OCI-LY7 (cell line): ENCODE measurements at regions of chr1 and their contacts with region 1.

Region 1: DNA sequence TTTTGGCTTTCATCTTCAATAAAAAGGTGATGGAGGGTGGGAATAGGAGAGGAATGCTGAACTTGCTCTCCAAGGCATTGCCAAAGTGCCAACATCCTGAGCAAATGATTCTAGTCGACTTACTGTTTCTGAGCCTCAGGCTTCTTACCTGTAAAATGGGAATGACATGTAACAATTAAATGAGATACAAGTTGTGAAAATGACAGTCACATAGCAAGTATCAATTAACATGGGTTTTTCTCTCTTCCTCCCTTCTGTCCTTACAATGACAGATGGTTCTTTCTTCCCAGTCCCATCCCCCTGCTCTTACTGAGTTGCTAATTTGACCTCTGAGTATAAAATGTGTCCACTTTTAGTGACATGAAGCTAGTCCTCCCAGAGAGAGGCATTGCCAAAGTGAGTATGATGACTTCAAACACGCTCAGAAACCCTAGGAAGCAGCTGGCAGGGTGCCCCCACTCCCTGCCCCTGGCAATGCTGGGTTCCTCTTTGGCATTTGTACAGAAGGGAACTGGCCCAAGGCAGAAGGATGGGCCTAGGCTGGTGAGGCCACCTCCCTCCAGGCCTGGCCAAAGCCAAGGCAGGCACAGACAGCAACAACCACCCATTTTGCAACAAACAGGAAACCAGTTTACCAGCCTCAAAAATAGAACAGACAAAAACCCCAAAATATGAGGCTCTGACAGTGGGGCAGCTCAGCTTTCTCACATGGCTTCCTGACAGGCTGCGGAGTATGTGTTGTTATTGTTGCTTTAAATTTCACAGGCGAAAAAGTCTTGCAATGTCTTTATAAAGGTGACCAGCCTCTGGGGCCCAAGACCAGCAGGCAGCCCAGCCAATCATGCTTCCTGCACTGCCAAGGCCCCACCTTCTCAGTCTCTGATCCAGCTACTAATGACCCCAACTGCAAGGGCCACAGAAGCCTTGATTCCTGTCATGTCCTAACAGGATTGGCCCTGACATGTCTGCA is 115.9 kb downstream of the HIVEP3 start:
- DNase-seq: peak; percentile 41
- H3K4me3 ChIP-seq: peak overlapping the region; percentile 21
- H3K27ac ChIP-seq: peak overlapping the region; percentile 55
- H3K4me1 ChIP-seq: peaks cover 47% of the 10 kb centered on the region
- CTCF ChIP-seq: no peak

Region 2: GRCh38 chr1:41341772-41342562 is 460.9 kb before region 1 on chr1:
- CTCF ChIA-PET with region 1: no interaction called
- POLR2A ChIA-PET with region 1: no interaction called
- intact Hi-C with region 1: no loop called
- DNase-seq: no peak
- H3K4me3 ChIP-seq: no peak overlapping the region
- H3K27ac ChIP-seq: no peak overlapping the region
- H3K4me1 ChIP-seq: no peaks in the 10 kb centered on the region
- CTCF ChIP-seq: no peak

Region 3: GRCh38 chr1:41728403-41729202 is 74.2 kb before region 1 on chr1:
- CTCF ChIA-PET with region 1: no interaction called
- POLR2A ChIA-PET with region 1: no interaction called
- intact Hi-C with region 1: loop called (anchors 5 kb)
- DNase-seq: peak; percentile 33
- H3K4me3 ChIP-seq: no peak overlapping the region
- H3K27ac ChIP-seq: no peak overlapping the region
- H3K4me1 ChIP-seq: peaks cover 35% of the 10 kb centered on the region
- CTCF ChIP-seq: no peak